Activated CD8-positive, alpha-beta T cell treated with anti-CD3 and anti-CD28 coated beads for 36 hours (primary cell): ENCODE measurements at regions of chr16 and their contacts with region 1.

Region 1: DNA sequence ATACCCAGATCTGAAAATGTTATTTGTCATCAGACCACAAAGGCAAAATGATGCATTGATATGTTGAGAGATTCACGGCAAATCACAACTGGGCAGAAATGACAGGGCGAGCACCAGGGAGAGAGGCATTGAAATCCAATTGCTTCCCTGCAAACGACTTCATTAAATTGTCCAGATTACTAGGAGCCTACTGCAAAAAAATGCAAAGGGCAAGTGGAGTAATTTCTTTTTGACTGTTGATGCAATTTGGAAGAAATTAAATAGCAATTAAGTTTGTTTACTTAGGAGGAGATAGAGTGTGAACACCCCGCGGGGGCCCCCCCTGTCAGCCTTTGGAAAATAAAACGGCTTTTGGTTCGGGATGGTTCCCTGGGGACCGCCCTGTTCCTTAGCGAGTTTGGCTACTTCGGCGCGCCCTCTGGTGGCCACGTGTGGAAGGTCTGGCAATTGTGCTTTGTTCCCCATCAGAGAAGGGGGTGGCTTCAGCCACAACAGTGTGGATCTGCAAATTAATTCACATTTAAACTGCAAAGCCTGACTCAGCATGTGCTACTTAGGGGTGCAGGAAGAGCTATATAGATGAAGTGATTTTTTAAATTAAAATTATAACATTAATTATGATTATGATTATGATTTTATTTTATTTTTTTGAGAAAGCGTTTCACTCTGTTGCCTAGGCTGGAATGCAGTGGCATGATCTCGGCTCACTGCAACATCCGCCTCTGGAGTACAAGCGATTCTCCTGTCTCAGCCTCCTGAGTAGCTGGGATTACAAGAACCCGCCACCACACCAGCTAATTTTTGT is 14.5 kb upstream of the TMC7 start:
- DNase-seq: peak; percentile 87
- ATAC-seq: peak; percentile 93
- H3K4me3 Mint-ChIP-seq: no peak overlapping the region
- H3K27ac Mint-ChIP-seq: no peak overlapping the region
- H3K4me1 Mint-ChIP-seq: peaks cover 6% of the 10 kb centered on the region
- H3K27me3 Mint-ChIP-seq: no peaks in the 10 kb centered on the region
- CTCF ChIP-seq: peak; percentile 96

Region 2: DNA sequence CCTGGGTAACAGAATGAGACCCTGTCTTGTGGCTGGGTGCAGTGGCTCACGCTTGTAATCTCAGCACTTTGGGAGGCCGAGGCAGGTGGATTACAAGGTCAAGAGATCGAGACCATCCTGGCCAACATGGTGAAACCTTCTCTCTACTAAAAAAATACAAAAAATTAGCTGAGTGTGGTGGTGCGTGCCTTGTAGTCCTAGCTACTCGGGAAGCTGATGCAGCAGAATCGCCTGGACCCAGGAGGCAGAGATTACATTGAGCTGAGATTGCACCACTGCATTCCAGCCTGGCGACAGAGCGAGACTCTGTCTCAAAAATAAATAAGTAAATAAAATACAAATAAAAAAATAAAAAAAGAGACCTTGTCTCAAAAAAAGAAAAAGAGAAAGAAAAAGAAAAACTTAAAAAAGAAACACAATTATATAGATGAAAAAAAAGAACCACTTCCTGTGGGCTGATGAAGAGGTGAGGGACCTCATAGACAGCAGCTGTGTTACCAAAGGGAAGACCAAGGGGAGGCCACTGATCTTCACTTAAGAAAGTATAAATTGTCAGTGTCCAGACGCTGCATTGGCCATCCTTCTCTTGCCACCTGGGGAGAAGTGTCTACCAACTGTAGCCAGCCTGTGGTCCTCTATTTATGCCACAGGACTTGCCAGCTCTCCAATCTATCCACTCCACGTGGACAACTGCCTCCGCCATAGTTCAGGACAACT is 18.6 kb before region 1 on chr16:
- CTCF ChIA-PET with region 1: interaction called, 14 read pairs
- POLR2A ChIA-PET with region 1: no interaction called
- intact Hi-C with region 1: no loop called
- DNase-seq: no peak
- ATAC-seq: no peak
- H3K4me3 Mint-ChIP-seq: no peak overlapping the region
- H3K27ac Mint-ChIP-seq: no peak overlapping the region
- H3K4me1 Mint-ChIP-seq: peaks cover 16% of the 10 kb centered on the region
- H3K27me3 Mint-ChIP-seq: no peaks in the 10 kb centered on the region
- CTCF ChIP-seq: no peak

Region 3: GRCh38 chr16:18983565-18984424 is 14.5 kb after region 1 on chr16 and contains the start of gene TMC7:
- CTCF ChIA-PET with region 1: interaction called, 26 read pairs
- POLR2A ChIA-PET with region 1: no interaction called
- intact Hi-C with region 1: no loop called
- DNase-seq: peak; percentile 55
- ATAC-seq: peak; percentile 74
- H3K4me3 Mint-ChIP-seq: peak within 1 kb of the TSS; percentile 15
- H3K27ac Mint-ChIP-seq: no peak within 1 kb of the TSS
- H3K4me1 Mint-ChIP-seq: peaks cover 2% of the 10 kb centered on the region
- H3K27me3 Mint-ChIP-seq: peaks cover 23% of the 10 kb centered on the region
- CTCF ChIP-seq: peak; percentile 48
- total RNA-seq, gene TMC7: not detected

Region 4: DNA sequence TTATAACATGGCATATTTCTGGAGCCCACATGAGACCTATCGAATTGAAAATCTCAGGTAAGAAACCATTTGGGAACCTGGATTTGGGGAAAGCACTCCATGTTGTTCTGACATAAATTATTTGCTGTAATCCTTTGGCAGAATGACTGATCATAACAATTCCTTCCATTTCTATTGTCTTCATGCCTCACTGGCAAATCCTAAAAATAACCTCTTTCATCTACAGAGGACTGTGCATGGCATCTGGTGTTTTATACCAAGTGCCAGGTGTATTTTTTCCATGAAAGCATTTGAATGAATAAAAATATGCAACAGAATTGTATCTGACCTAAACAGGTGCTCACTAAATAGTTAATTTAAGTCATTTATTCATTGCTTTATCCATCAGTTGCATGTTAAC is 64.5 kb after region 1 on chr16:
- CTCF ChIA-PET with region 1: no interaction called
- POLR2A ChIA-PET with region 1: no interaction called
- intact Hi-C with region 1: no loop called
- DNase-seq: no peak
- ATAC-seq: no peak
- H3K4me3 Mint-ChIP-seq: no peak overlapping the region
- H3K27ac Mint-ChIP-seq: no peak overlapping the region
- H3K4me1 Mint-ChIP-seq: no peaks in the 10 kb centered on the region
- H3K27me3 Mint-ChIP-seq: peaks cover 2% of the 10 kb centered on the region
- CTCF ChIP-seq: no peak

Region 5: GRCh38 chr16:19130852-19131810 is 161.9 kb after region 1 on chr16:
- CTCF ChIA-PET with region 1: no interaction called
- POLR2A ChIA-PET with region 1: no interaction called
- intact Hi-C with region 1: no loop called
- DNase-seq: no peak
- ATAC-seq: peak; percentile 40
- H3K4me3 Mint-ChIP-seq: peak overlapping the region; percentile 15
- H3K27ac Mint-ChIP-seq: peak overlapping the region; percentile 54
- H3K4me1 Mint-ChIP-seq: peaks cover 32% of the 10 kb centered on the region
- H3K27me3 Mint-ChIP-seq: peaks cover 5% of the 10 kb centered on the region
- CTCF ChIP-seq: no peak